A673 (cell line): ENCODE measurements at regions of chr1 and their contacts with region 1.

Region 1: DNA sequence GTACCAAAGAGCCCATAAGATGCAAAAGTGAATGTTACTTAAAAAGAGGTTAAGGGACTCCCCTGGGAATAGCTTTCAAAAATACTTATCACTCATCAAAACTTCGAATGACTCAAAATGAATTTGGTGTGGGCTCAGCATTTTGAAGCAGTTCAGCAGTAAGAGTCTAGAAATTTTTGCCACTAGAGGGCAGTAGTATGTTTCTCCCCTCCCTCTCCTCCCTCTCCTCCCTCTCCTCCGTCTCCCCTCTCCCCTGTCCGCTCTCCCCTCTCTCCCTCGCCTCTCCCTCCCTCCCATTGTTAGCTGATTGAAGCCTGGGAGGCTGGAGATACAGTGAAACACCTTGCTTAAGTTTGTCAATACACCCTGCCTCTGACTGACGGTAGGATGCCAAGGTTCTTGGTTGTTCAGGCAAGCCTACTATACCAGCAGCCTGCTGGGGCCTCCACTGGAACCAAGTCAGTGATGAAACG is 70.8 kb upstream of the TENT5C start:
- DNase-seq: peak; percentile 82
- H3K4me3 ChIP-seq: no peak overlapping the region
- H3K27ac ChIP-seq: no peak overlapping the region
- H3K4me1 ChIP-seq: no peaks in the 10 kb centered on the region
- H3K27me3 ChIP-seq: no peaks in the 10 kb centered on the region
- CTCF ChIP-seq: peak; percentile 73

Region 2: DNA sequence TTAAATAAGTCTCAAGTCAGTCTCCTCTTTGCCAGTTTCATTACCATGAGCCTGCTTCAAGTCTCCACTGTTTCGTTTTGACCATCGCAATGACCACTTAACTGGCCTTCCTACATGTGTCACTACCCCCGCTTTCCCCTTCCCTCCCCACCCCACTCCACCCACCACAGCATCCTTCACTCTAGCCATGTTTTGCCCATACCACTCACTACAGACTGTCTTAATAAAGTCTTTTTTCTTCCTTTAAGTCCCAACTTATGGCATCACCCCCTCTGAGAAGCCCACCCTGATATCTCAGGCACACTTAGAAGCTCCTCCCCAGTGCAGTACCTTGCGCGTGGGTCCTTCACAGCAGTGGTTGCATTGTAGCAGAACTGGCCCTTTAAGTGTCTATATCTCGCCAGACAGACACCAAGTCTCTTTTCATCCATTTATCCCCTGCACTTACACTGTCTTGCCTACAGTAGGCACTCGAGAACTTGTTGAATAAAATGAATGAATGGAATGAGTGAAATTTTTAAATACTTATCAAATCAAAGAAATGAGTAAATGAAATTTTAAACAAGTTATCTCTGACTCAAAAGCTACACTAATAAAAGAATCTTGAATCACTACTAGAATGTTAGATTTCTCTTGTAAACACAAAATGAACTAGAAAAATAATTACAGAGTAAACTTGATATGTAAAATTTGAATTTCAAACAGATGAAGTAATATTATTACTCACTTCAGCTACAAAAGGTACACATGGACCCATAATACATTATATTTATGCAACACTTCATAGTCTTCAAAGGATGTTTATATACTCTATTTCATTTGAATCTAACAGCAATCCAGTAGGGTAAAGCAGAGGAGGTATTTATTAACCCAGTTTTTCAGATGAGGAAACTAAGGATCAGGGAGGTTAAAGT is 222.5 kb before region 1 on chr1:
- CTCF ChIA-PET with region 1: interaction called, 17 read pairs
- POLR2A ChIA-PET with region 1: no interaction called
- intact Hi-C with region 1: no loop called
- DNase-seq: peak; percentile 52
- H3K4me3 ChIP-seq: no peak overlapping the region
- H3K27ac ChIP-seq: no peak overlapping the region
- H3K4me1 ChIP-seq: no peaks in the 10 kb centered on the region
- H3K27me3 ChIP-seq: no peaks in the 10 kb centered on the region
- CTCF ChIP-seq: peak; percentile 68

Region 3: GRCh38 chr1:117674521-117675397 is 139.7 kb after region 1 on chr1:
- CTCF ChIA-PET with region 1: no interaction called
- POLR2A ChIA-PET with region 1: no interaction called
- intact Hi-C with region 1: loop called (anchors 5 kb)
- DNase-seq: peak; percentile 38
- H3K4me3 ChIP-seq: no peak overlapping the region
- H3K27ac ChIP-seq: no peak overlapping the region
- H3K4me1 ChIP-seq: no peaks in the 10 kb centered on the region
- H3K27me3 ChIP-seq: no peaks in the 10 kb centered on the region
- CTCF ChIP-seq: peak; percentile 49

Region 4: GRCh38 chr1:117753654-117754054 is 218.6 kb after region 1 on chr1:
- CTCF ChIA-PET with region 1: interaction called, 12 read pairs
- POLR2A ChIA-PET with region 1: no interaction called
- intact Hi-C with region 1: loop called (anchors 2 kb)
- DNase-seq: no peak
- H3K4me3 ChIP-seq: no peak overlapping the region
- H3K27ac ChIP-seq: no peak overlapping the region
- H3K4me1 ChIP-seq: peaks cover 6% of the 10 kb centered on the region
- H3K27me3 ChIP-seq: no peaks in the 10 kb centered on the region
- CTCF ChIP-seq: no peak

Region 5: DNA sequence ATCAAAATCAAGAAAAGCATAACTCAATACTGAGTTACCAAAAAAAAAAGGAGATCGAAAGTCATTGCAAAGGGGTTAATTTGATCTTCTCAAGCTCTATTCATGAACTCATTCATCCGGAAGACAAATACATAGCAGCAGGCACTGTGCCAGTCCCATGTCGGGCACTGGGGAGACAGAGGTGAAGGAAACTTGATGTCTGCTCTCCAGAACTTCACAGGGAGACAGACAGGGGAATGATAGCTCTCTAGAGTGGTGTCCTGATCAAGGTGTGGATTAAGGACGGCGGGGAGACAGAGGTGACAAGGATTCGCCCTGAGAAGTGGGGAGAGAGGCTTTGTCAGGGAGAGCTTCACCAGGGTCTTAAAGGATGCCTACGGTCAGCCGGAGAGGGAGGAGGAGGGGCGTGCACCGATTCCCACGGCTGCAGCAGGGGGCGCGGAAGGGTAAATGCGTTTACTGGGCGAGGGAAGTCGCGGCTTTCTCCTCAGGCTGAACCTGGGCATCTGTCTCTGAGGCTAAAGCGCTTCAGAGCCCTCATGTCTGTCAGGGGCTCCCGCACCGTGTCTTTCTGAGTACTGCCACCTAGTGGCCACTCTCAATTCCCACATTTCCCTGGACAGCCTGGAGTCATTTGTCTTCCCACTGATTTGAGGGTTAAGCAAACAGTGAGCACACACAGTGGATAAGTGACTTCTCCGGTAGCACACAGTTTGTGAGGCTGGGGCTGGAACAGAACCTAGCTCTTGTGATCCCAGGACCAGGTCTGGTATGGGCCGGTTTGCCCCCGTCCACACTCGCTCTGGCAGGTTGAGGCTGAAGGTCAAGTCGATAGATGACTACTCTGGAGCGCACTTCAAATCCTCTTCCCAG is 223.6 kb after region 1 on chr1:
- CTCF ChIA-PET with region 1: interaction called, 12 read pairs
- POLR2A ChIA-PET with region 1: no interaction called
- intact Hi-C with region 1: loop called (anchors 2 kb)
- DNase-seq: peak; percentile 86
- H3K4me3 ChIP-seq: peak overlapping the region; percentile 33
- H3K27ac ChIP-seq: no peak overlapping the region
- H3K4me1 ChIP-seq: peaks cover 7% of the 10 kb centered on the region
- H3K27me3 ChIP-seq: no peaks in the 10 kb centered on the region
- CTCF ChIP-seq: peak; percentile 94

Region 6: DNA sequence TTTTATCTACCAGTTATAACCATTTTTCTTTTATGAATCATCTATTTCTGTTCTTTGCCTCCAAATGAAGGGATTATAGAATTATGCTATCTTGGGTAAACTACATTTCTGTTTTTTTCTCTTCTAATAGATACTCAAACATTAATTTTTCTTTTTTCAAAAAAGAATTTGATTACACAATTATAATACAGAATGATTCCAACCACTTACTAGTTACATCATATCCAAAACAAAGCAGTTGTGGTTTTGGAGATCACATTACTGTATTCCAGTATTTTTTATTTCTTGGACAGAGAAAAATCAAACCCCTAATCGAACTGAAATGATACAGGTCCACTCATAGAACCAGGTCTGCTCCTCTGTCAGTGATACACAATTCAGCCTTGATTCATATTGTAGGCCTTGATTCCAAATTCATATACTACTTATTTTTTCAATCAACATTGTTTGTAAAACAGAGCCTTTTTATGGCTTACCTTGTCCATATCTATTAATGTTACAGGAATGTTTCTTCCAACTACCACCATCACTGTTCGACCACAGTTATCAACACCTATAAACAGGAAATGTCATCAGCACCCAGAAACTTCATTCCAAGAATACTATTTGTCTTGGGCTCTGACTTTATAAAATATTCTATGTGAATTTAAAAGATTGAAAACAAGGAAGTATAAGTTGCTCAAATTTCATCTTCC is 351.2 kb after region 1 on chr1:
- CTCF ChIA-PET with region 1: interaction called, 11 read pairs
- POLR2A ChIA-PET with region 1: no interaction called
- intact Hi-C with region 1: no loop called
- DNase-seq: no peak
- H3K4me3 ChIP-seq: no peak overlapping the region
- H3K27ac ChIP-seq: no peak overlapping the region
- H3K4me1 ChIP-seq: no peaks in the 10 kb centered on the region
- H3K27me3 ChIP-seq: no peaks in the 10 kb centered on the region
- CTCF ChIP-seq: no peak